K562 (cell line): ENCODE measurements at regions of chr9 and their contacts with region 1.

Region 1: GRCh38 chr9:69035438-69036308 is at the start of gene FXN:
- DNase-seq: peak; percentile 84 to 85 (median 84)
- ATAC-seq: peak; percentile 97
- H3K4me3 ChIP-seq: peak within 1 kb of the TSS; percentile 84
- H3K27ac ChIP-seq: peak within 1 kb of the TSS; percentile 86
- H3K4me1 ChIP-seq: peaks cover 0 to 3% of the 10 kb centered on the region in 2 experiments; a peak in 3 of 5 replicates
- H3K27me3 ChIP-seq: no peaks in the 10 kb centered on the region
- CTCF ChIP-seq: peak; percentile 86 to 93 (median 91)
- EP300 ChIP-seq: no peak
- POLR2A ChIP-seq: peak; percentile 67
- RAD21 ChIP-seq: peak; percentile 64 to 75
- polyA plus RNA-seq, gene FXN: 12.4 to 21.8 TPM

Region 2: GRCh38 chr9:68974431-68974830 is 61.2 kb before region 1 on chr9:
- CTCF ChIA-PET with region 1: no interaction called
- POLR2A ChIA-PET with region 1: no interaction called
- in situ Hi-C with region 1: no loop called
- intact Hi-C with region 1: no loop called
- DNase-seq: no peak
- ATAC-seq: peak; percentile 17; the same call in 2 of the 3 replicates
- H3K4me3 ChIP-seq: no peak overlapping the region
- H3K27ac ChIP-seq: peak overlapping the region; percentile 57
- H3K4me1 ChIP-seq: peaks cover 5 to 51% of the 10 kb centered on the region in 2 experiments
- H3K27me3 ChIP-seq: no peaks in the 10 kb centered on the region
- CTCF ChIP-seq: no peak
- EP300 ChIP-seq: no peak
- POLR2A ChIP-seq: no peak
- RAD21 ChIP-seq: no peak

Region 3: GRCh38 chr9:69193685-69194032 is 158.0 kb after region 1 on chr9:
- CTCF ChIA-PET with region 1: interaction called, 6 read pairs
- POLR2A ChIA-PET with region 1: no interaction called
- in situ Hi-C with region 1: no loop called
- intact Hi-C with region 1: loop called (anchors 1 kb)
- DNase-seq: peak in 2 of 4 experiments; percentile 31 to 44
- ATAC-seq: peak; percentile 75
- H3K4me3 ChIP-seq: no peak overlapping the region
- H3K27ac ChIP-seq: no peak overlapping the region
- H3K4me1 ChIP-seq: peaks cover 4 to 31% of the 10 kb centered on the region in 2 experiments; a peak in 4 of 5 replicates
- H3K27me3 ChIP-seq: no peaks in the 10 kb centered on the region
- CTCF ChIP-seq: peak in 2 of 3 experiments; percentile 34 to 50; a peak in 4 of 6 replicates
- EP300 ChIP-seq: no peak
- POLR2A ChIP-seq: no peak
- RAD21 ChIP-seq: peak; percentile 24 to 68

Region 4: DNA sequence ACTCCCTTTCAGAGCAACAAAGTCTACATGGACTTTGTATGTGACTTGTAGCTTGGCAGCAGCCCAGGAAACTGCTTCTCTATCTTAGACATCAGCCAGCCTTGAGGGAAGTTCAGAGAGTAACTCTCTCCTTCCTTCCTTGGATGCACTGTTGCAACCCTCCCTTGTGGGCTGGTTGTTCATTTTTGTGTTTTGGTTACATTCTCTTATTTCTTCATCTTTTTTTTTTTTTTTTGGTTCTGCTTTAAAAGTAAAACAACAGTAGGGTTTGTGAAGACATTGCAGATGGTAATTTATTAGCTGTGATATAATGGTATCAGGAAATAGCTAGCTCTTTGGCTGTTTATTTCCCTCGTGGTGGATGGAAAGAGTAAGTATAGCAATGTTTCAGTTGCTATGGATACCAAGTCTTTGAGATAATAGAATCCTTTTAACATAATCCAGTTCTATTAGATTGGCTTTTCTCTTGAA is 910.0 kb after region 1 on chr9:
- CTCF ChIA-PET with region 1: no interaction called
- POLR2A ChIA-PET with region 1: no interaction called
- in situ Hi-C with region 1: loop called (anchors 25 kb)
- intact Hi-C with region 1: no loop called
- DNase-seq: peak in 1 of 4 experiments; percentile 16
- ATAC-seq: no peak
- H3K4me3 ChIP-seq: no peak overlapping the region
- H3K27ac ChIP-seq: no peak overlapping the region; the same call in 2 of the 3 replicates
- H3K4me1 ChIP-seq: no peaks in the 10 kb centered on the region
- H3K27me3 ChIP-seq: no peaks in the 10 kb centered on the region
- CTCF ChIP-seq: no peak
- EP300 ChIP-seq: no peak
- POLR2A ChIP-seq: no peak
- RAD21 ChIP-seq: no peak